ENCODE measurements at regions of chr7 and their contacts with region 1.

Region 1: DNA sequence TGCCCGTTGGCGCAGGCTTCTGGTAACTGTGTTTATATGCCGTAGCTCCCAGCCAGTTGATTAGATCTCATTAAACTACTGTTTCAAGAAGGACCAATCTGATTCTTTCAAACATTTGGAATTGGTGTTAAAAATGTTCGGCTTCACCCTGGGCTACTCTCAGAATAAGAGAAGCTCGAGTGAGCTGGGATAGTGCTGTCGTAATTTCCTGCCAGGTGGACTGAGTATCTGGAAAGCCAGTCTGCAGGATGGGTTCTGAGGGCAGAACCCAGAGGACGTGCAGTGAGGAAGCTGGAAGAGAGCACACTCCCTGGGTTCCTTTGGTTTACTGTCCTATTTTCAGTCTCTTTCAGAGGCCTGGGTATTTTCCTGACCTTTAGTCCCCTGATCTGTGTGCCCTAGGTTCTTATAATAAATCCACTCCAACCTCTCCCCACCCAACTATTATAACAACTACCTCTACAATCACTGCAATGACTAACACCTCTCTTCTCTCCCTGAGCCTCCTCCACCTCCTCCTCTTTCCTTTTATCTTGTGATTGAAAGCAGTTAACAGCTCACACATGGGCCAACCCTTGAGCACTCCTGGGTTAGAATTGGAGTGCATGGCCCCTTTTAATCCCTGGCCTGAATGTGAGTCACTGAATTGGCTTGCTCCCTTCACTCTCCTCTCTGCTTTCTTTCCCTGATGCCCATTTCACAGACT is 63.0 kb downstream of the AOAH start:
- H3K4me3 Mint-ChIP-seq: no peak overlapping the region
- H3K27ac Mint-ChIP-seq: peak overlapping the region; percentile 23
- H3K4me1 Mint-ChIP-seq: peaks cover 36% of the 10 kb centered on the region
- H3K27me3 Mint-ChIP-seq: no peaks in the 10 kb centered on the region

Region 2: DNA sequence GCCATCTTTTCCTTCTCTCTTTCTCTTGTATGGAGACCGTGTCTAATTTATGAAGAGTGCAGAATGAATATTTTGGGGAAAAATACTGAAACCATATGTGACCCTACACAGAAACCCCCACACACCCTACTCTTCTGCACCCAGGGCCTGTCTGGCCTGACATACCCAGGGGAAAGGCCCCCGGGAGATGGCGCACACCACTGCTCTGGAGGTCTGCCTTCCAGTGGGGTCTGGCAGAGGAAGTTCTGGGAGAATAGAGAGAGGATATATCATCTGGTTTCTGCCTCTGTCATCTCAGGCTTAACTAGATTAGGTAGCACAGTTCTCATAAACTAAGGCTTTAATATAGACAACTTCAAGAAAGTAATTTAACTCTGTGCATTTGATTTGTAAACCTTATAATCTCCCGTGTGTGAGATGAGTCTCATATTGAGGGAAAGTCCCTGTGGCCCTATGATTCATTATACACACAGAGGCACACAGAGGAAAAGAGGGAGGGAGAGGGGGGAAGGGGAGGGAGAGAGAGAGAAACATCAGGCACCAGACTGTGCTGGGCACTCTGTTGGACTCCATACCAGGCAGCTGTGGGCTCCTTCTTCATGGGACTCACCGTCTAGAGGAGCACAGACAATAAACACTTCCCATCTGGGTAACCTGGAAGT is 60.3 kb before region 1 on chr7:
- intact Hi-C with region 1: loop called (anchors 10 kb)
- H3K4me3 Mint-ChIP-seq: no peak overlapping the region
- H3K27ac Mint-ChIP-seq: peak overlapping the region; percentile 42
- H3K4me1 Mint-ChIP-seq: peaks cover 49% of the 10 kb centered on the region
- H3K27me3 Mint-ChIP-seq: no peaks in the 10 kb centered on the region